Endothelial cell of umbilical vein (primary cell): ENCODE measurements at regions of chr6 and their contacts with region 1.

Region 1: DNA sequence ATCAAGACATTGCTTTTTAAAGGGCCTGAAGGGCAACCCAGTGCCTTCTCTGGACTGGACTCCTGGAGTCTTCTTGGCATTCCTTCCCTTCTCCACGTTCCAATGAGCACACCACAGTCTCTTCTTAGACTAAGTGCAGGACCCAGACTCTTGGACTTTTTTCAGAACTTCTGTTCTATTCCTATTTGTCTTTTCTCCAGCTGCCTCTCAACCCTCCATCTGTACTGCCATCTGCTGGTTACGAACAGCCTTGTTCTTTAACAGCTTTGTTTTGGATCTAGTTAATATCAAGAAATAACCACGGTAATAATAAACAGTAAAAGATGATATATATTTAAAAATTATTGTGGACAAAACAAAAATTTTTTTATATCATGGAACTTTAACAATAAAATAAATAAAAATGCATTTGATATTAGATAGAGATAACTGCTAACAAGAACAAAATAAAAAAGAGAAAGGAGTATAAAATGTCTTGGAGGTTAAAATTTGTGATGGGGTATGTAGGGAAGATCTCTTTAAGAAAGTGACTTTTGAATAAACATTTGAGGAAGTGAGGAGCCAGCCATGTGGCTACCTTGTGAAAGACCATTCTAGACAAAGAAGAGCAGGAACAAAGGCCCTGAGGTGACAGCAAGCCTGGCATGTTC is 105.1 kb upstream of the HCRTR2 start:
- DNase-seq: peak; percentile 60
- H3K4me3 ChIP-seq: no peak overlapping the region
- H3K27ac ChIP-seq: no peak overlapping the region
- H3K4me1 ChIP-seq: no peaks in the 10 kb centered on the region
- H3K27me3 ChIP-seq: no peaks in the 10 kb centered on the region
- CTCF ChIP-seq: peak; percentile 35 to 46
- POLR2A ChIP-seq: no peak

Region 2: GRCh38 chr6:53979468-53980067 is 1089.7 kb before region 1 on chr6:
- CTCF ChIA-PET with region 1: interaction called, 12 read pairs
- POLR2A ChIA-PET with region 1: no interaction called
- dilution Hi-C with region 1: no loop called
- intact Hi-C with region 1: loop called (anchors 1 kb)
- DNase-seq: peak; percentile 64
- H3K4me3 ChIP-seq: no peak overlapping the region
- H3K27ac ChIP-seq: no peak overlapping the region
- H3K4me1 ChIP-seq: peaks cover 10% of the 10 kb centered on the region
- H3K27me3 ChIP-seq: no peaks in the 10 kb centered on the region
- CTCF ChIP-seq: peak; percentile 50 to 54
- POLR2A ChIP-seq: no peak

Region 3: DNA sequence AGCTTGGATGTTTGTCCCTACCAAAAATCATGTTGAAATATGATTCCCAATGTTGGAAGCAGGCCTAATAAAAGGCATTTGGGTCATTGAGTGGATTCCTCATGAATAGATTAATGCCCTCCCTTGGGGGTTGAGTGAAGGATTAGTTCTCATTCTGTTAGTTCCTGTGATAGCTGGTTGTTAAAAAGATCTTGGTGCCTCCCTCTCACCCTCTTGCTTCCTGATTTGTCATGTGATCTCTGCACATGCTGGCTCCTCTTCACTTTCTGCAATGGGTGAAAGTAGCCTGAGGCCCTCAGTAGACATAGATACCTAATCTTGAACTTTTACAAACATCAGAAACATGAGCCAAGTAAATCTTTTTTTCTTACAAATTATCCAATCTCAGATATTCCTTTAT is 10.6 kb before region 1 on chr6:
- CTCF ChIA-PET with region 1: interaction called, 13 read pairs
- POLR2A ChIA-PET with region 1: no interaction called
- dilution Hi-C with region 1: no loop called
- intact Hi-C with region 1: no loop called
- DNase-seq: no peak
- H3K4me3 ChIP-seq: no peak overlapping the region
- H3K27ac ChIP-seq: no peak overlapping the region
- H3K4me1 ChIP-seq: no peaks in the 10 kb centered on the region
- H3K27me3 ChIP-seq: no peaks in the 10 kb centered on the region
- CTCF ChIP-seq: no peak
- POLR2A ChIP-seq: no peak

Region 4: GRCh38 chr6:55198708-55199107 is 129.5 kb after region 1 on chr6:
- CTCF ChIA-PET with region 1: no interaction called
- POLR2A ChIA-PET with region 1: no interaction called
- dilution Hi-C with region 1: no loop called
- intact Hi-C with region 1: no loop called
- DNase-seq: no peak
- H3K4me3 ChIP-seq: no peak overlapping the region
- H3K27ac ChIP-seq: no peak overlapping the region
- H3K4me1 ChIP-seq: no peaks in the 10 kb centered on the region
- H3K27me3 ChIP-seq: no peaks in the 10 kb centered on the region
- CTCF ChIP-seq: no peak
- POLR2A ChIP-seq: no peak

Region 5: DNA sequence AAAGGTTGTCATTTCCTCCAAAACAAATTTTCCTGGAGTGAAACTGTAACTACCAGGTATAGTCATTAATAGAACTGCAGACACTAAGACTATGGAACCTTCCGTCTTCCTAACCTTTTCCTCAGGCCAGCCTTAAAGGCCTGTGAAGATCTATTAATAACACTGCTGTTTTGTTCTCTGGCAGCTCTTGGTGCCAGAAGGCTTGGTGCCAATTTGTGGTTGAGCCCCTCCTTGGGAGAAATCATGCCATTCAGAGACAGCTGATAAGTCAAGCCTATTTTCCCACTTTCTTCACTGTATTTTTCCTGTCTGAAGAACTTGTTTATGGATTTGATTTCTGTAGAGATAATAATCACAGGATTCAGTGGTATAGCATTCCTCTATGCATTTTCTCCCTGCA is 169.8 kb after region 1 on chr6:
- CTCF ChIA-PET with region 1: no interaction called
- POLR2A ChIA-PET with region 1: no interaction called
- dilution Hi-C with region 1: no loop called
- intact Hi-C with region 1: loop called (anchors 5 kb)
- DNase-seq: peak; percentile 28
- H3K4me3 ChIP-seq: no peak overlapping the region
- H3K27ac ChIP-seq: no peak overlapping the region
- H3K4me1 ChIP-seq: no peaks in the 10 kb centered on the region
- H3K27me3 ChIP-seq: peaks cover 0 to 5% of the 10 kb centered on the region in 2 experiments
- CTCF ChIP-seq: no peak
- POLR2A ChIP-seq: no peak

Region 6: DNA sequence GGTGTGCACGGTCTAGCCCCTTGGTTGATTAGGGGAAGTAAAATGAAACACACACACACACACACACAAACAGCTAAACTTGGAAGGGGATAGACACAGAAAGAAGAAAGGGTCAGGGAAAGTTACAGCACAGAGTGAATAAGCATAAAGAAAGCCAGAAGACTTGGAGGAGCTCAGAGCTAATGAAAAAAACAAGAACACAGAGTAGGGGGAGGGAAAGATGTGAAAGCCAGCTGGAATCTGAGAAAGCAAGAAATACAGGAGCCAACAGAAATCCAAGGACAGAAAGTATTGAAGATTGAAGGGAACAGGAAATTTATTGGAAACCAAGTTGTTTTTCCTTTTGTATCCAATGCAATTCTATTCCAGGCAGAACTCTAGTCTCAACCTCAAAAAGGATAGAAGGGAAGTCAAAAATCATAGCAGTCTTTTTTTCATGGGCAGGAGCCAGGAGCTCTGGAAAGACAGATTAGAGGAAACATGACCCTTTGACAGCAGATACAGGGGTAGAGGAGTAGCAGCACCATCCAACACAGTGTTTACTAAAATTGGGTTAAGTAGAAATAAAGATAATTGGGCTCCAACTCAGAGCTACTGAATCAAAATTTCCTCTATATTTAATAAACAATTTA is 499.7 kb after region 1 on chr6:
- CTCF ChIA-PET with region 1: no interaction called
- POLR2A ChIA-PET with region 1: no interaction called
- dilution Hi-C with region 1: no loop called
- intact Hi-C with region 1: no loop called
- DNase-seq: no peak
- H3K4me3 ChIP-seq: no peak overlapping the region
- H3K27ac ChIP-seq: no peak overlapping the region
- H3K4me1 ChIP-seq: no peaks in the 10 kb centered on the region
- H3K27me3 ChIP-seq: no peaks in the 10 kb centered on the region
- CTCF ChIP-seq: no peak
- POLR2A ChIP-seq: no peak